Naive thymus-derived CD4-positive, alpha-beta T cell (primary cell): ENCODE measurements at regions of chr2 and their contacts with region 1.

Region 1: GRCh38 chr2:231706731-231707624 is 1.3 kb upstream of the PTMA start:
- DNase-seq: peak; percentile 96 to 99 (median 97)
- ATAC-seq: peak; percentile 62
- H3K4me3 ChIP-seq: peak overlapping the region; percentile 78
- H3K4me3 Mint-ChIP-seq: peak overlapping the region; percentile 95 to 99 (median 97)
- H3K27ac ChIP-seq: peak overlapping the region; percentile 100
- H3K27ac Mint-ChIP-seq: peak overlapping the region; percentile 100
- H3K4me1 ChIP-seq: peaks cover 19 to 21% of the 10 kb centered on the region in 2 donors
- H3K4me1 Mint-ChIP-seq: peaks cover 11 to 34% (median 23%) of the 10 kb centered on the region in 7 donors
- H3K27me3 ChIP-seq: no peaks in the 10 kb centered on the region
- H3K27me3 Mint-ChIP-seq: peaks cover 0 to 6% (median 0%) of the 10 kb centered on the region in 5 donors

Region 2: DNA sequence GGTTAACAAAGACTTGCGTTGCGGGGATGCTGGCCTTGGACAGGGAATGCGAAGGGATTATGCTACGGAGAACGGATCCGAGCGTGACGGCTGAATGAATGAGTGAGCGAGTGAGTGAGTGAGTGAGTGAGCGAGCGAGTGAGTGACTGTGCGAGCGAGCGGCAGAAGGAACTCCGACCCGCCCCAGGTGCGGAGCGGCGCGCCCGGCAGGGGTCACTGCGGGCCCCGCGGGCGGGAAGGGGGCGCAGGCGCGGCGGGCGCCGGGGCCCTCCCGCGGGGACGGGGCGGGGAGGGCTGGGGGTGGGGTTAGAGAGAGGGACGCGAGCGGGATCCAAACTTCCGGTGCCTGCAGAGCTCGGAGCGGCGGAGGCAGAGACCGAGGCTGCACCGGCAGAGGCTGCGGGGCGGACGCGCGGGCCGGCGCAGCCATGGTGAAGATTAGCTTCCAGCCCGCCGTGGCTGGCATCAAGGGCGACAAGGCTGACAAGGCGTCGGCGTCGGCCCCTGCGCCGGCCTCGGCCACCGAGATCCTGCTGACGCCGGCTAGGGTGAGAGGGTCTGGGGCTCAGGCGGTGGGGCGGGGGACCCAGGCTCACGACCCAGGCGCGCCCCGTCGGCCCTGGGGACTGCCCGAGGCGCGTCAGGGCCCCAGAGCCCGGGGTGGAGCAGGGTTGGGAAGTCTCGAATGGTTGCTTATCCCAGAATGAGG is 842.2 kb before region 1 on chr2 and contains the start of gene ITM2C:
- CTCF ChIA-PET with region 1: no interaction called
- POLR2A ChIA-PET with region 1: no interaction called
- intact Hi-C with region 1: no loop called
- DNase-seq: peak; percentile 67 to 78 (median 75)
- ATAC-seq: peak; percentile 92
- H3K4me3 ChIP-seq: peak within 1 kb of the TSS; percentile 66
- H3K4me3 Mint-ChIP-seq: peak within 1 kb of the TSS; percentile 77 to 98 (median 94)
- H3K27ac ChIP-seq: peak within 1 kb of the TSS; percentile 54
- H3K27ac Mint-ChIP-seq: peak within 1 kb of the TSS; percentile 28 to 92 (median 81)
- H3K4me1 ChIP-seq: peaks cover 24 to 27% of the 10 kb centered on the region in 2 donors
- H3K4me1 Mint-ChIP-seq: peaks cover 24 to 50% (median 46%) of the 10 kb centered on the region in 7 donors
- H3K27me3 ChIP-seq: no peaks in the 10 kb centered on the region
- H3K27me3 Mint-ChIP-seq: peaks cover 0 to 64% (median 2%) of the 10 kb centered on the region in 5 donors
- total RNA-seq, gene ITM2C: 7.4 to 27.7 (median 24.7) TPM

Region 3: DNA sequence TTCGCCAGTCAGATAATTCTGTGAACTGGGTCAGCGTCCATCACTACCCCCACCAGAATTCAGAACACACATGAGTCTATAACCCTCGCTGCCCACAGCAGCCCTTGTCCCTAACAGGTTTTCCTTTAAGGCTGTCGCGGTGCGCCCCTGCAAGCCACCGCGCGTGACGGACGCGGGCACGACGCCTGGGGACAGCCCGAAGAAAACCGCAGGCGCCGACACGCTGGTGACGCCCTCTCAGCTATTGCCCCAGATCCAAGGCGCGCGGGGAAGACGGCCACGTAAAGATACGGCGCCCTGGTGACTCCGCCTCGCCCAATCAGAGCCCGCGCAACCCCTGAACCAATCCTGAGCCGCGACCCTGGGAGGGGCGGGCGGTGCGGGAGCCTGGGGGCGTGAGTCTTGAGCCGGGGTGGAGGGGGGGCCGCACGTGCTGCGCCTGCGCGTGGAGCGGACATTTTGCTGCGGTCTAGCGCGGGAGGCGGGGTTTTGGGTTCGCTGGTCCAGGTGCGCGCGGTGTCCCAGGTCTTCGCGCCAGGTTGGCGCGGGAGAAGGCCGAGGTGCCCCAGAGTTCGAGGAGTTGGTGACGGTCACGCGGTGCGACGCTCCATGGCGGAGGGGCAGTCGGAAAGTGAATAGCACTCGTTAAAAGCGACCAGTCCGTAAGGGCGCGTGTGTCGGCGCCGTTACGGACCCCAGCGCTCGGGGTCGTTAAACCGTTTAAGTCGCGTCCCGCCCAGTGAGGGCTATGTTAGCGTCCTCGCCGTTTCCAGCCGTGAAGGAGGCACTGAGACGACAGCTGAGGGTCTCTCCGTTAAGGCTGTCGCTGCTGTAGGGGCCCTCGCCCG is 192.7 kb before region 1 on chr2:
- CTCF ChIA-PET with region 1: no interaction called
- POLR2A ChIA-PET with region 1: interaction called, 7 read pairs
- intact Hi-C with region 1: loop called (anchors 1 kb)
- DNase-seq: peak; percentile 92 to 99 (median 98)
- ATAC-seq: peak; percentile 99
- H3K4me3 ChIP-seq: peak overlapping the region; percentile 84
- H3K4me3 Mint-ChIP-seq: peak overlapping the region; percentile 80 to 95 (median 92)
- H3K27ac ChIP-seq: peak overlapping the region; percentile 93
- H3K27ac Mint-ChIP-seq: peak overlapping the region; percentile 93 to 99 (median 98)
- H3K4me1 ChIP-seq: peaks cover 5 to 11% of the 10 kb centered on the region in 2 donors
- H3K4me1 Mint-ChIP-seq: peaks cover 0 to 21% (median 14%) of the 10 kb centered on the region in 7 donors
- H3K27me3 ChIP-seq: no peaks in the 10 kb centered on the region
- H3K27me3 Mint-ChIP-seq: peaks cover 0 to 4% (median 0%) of the 10 kb centered on the region in 5 donors

Region 4: GRCh38 chr2:231612179-231613053 is 94.6 kb before region 1 on chr2:
- CTCF ChIA-PET with region 1: interaction called, 6 read pairs
- POLR2A ChIA-PET with region 1: interaction called, 52 read pairs
- intact Hi-C with region 1: loop called in 1 of 2 experiments (anchors 1 kb)
- DNase-seq: peak; percentile 70 to 95 (median 84)
- ATAC-seq: peak; percentile 88
- H3K4me3 ChIP-seq: peak overlapping the region; percentile 63
- H3K4me3 Mint-ChIP-seq: peak overlapping the region; percentile 65 to 96 (median 86)
- H3K27ac ChIP-seq: no peak overlapping the region
- H3K27ac Mint-ChIP-seq: peak overlapping the region in 7 of 9 donors; percentile 38 to 99 (median 69)
- H3K4me1 ChIP-seq: peaks cover 13 to 19% of the 10 kb centered on the region in 2 donors
- H3K4me1 Mint-ChIP-seq: peaks cover 7 to 51% (median 31%) of the 10 kb centered on the region in 7 donors
- H3K27me3 ChIP-seq: no peaks in the 10 kb centered on the region
- H3K27me3 Mint-ChIP-seq: no peaks in the 10 kb centered on the region

Region 5: DNA sequence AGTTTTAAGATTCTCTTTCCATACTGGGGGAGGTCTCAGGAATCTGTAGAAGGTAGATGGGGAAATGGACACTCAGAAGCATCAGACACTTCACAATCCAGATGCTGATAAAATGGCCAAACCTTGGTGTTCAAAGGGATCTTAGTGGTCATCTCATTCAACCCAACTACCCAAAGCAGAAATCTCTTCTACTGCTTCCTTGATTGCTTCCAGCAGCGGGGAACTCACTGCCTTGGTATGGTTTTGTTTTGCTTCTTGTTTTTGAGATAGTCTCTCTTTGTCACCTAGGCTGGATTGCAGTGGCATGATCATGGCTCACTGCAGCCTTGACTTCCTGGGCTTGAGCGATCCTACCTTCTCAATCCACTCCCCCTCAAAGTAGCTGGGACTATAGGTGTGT is 38.0 kb before region 1 on chr2:
- CTCF ChIA-PET with region 1: interaction called, 475 read pairs
- POLR2A ChIA-PET with region 1: interaction called, 241 read pairs
- intact Hi-C with region 1: no loop called
- DNase-seq: no peak
- ATAC-seq: no peak
- H3K4me3 ChIP-seq: no peak overlapping the region
- H3K4me3 Mint-ChIP-seq: no peak overlapping the region
- H3K27ac ChIP-seq: no peak overlapping the region
- H3K27ac Mint-ChIP-seq: no peak overlapping the region
- H3K4me1 ChIP-seq: no peaks in the 10 kb centered on the region
- H3K4me1 Mint-ChIP-seq: peaks cover 0 to 32% (median 7%) of the 10 kb centered on the region in 7 donors
- H3K27me3 ChIP-seq: no peaks in the 10 kb centered on the region
- H3K27me3 Mint-ChIP-seq: no peaks in the 10 kb centered on the region

Region 6: GRCh38 chr2:231780909-231781797 is 74.2 kb after region 1 on chr2 and contains the start of gene PDE6D:
- CTCF ChIA-PET with region 1: interaction called, 3 read pairs
- POLR2A ChIA-PET with region 1: interaction called, 5 read pairs
- intact Hi-C with region 1: loop called (anchors 1 kb)
- DNase-seq: peak; percentile 90 to 98 (median 94)
- ATAC-seq: peak; percentile 94
- H3K4me3 ChIP-seq: peak within 1 kb of the TSS; percentile 100
- H3K4me3 Mint-ChIP-seq: peak within 1 kb of the TSS; percentile 85 to 99 (median 98)
- H3K27ac ChIP-seq: peak within 1 kb of the TSS; percentile 82
- H3K27ac Mint-ChIP-seq: peak within 1 kb of the TSS; percentile 90 to 98 (median 94)
- H3K4me1 ChIP-seq: peaks cover 26 to 30% of the 10 kb centered on the region in 2 donors
- H3K4me1 Mint-ChIP-seq: peaks cover 45 to 76% (median 57%) of the 10 kb centered on the region in 7 donors
- H3K27me3 ChIP-seq: no peaks in the 10 kb centered on the region
- H3K27me3 Mint-ChIP-seq: peaks cover 0 to 5% (median 0%) of the 10 kb centered on the region in 5 donors
- total RNA-seq, gene PDE6D: 14.3 to 35.7 (median 25.2) TPM

Region 7: GRCh38 chr2:232315049-232315922 is 608.3 kb after region 1 on chr2:
- CTCF ChIA-PET with region 1: no interaction called
- POLR2A ChIA-PET with region 1: interaction called, 3 read pairs
- intact Hi-C with region 1: loop called in 1 of 2 experiments (anchors 5 kb)
- DNase-seq: peak; percentile 31 to 78 (median 70)
- ATAC-seq: peak; percentile 91
- H3K4me3 ChIP-seq: peak overlapping the region; percentile 25
- H3K4me3 Mint-ChIP-seq: peak overlapping the region; percentile 66 to 88 (median 78)
- H3K27ac ChIP-seq: peak overlapping the region; percentile 62
- H3K27ac Mint-ChIP-seq: peak overlapping the region; percentile 90 to 97 (median 92)
- H3K4me1 ChIP-seq: peaks cover 64 to 77% of the 10 kb centered on the region in 2 donors
- H3K4me1 Mint-ChIP-seq: peaks cover 62 to 100% (median 94%) of the 10 kb centered on the region in 7 donors
- H3K27me3 ChIP-seq: no peaks in the 10 kb centered on the region
- H3K27me3 Mint-ChIP-seq: no peaks in the 10 kb centered on the region